AG04450 (cell line): ENCODE measurements at regions of chr2 and their contacts with region 1.

Region 1: DNA sequence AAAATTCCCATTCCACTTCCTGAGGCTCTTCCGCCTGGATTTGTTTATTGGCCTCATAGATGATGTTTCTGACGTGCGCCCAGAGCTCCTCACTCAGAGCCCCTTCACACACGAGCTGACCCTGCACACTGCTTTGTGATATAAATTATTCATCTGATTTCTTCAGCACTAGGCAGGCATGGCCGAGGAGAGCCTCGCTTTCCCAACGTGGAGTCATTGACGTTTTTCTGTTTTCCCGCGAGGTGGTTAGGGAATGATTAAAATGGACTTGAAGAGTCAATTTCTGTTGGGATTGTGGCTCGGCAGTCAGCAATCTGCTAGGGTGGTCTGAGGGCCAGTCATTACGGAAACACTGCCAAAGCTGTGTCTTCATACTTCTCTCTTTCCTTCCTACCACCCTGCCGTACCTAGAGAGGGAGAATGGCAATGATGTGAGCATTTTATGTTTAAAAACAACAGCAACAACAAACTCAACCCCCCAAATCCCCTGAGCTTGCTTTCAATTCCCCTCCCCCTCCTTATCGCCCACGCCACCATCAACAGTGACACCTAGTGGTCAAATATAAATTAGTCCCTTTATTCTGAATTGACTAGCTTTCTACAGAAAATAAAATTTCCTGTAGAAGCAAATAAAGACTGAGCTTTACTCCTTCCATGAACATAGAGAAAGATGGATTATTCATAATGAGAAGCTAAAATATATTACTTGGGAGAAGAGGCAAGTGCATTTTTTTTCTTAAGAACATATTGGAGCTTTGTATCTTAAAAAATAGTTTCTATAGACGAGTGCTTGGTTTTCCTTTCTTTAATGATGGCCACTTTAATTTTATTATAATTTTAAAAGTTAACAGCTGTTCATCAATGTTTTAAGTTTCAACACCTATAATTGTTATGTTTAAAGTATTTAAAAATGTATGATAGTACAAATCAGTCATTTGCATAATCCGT is 285.1 kb downstream of the MTX2 start:
- DNase-seq: peak; percentile 34
- H3K4me3 ChIP-seq: peak overlapping the region; percentile 59
- H3K27ac ChIP-seq: no peak overlapping the region
- H3K27me3 ChIP-seq: no peaks in the 10 kb centered on the region
- CTCF ChIP-seq: peak; percentile 78

Region 2: DNA sequence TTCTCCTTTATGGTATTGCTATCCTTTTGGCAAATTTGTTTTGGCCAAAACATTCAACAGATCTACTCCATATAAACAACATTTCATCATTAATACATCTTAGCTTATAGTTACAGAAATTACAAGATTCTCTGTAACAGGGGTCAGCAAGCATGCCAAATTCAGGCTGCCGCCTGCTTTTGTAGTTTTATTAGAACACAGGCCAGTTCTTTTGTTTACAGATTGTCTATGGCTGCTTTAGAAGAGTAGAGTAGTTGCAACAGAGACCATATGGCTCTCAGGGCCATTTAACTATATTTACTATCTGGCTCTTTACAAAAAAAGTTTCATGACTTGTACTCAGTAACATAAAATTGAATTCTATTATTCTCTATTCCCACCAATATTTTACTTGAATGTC is 606.2 kb before region 1 on chr2:
- CTCF ChIA-PET with region 1: no interaction called
- POLR2A ChIA-PET with region 1: no interaction called
- DNase-seq: no peak
- H3K4me3 ChIP-seq: no peak overlapping the region
- H3K27ac ChIP-seq: no peak overlapping the region
- H3K27me3 ChIP-seq: no peaks in the 10 kb centered on the region
- CTCF ChIP-seq: no peak

Region 3: GRCh38 chr2:176126929-176127773 is 427.2 kb before region 1 on chr2:
- CTCF ChIA-PET with region 1: interaction called, 77 read pairs
- POLR2A ChIA-PET with region 1: no interaction called
- DNase-seq: peak; percentile 29
- H3K4me3 ChIP-seq: no peak overlapping the region
- H3K27ac ChIP-seq: no peak overlapping the region
- H3K27me3 ChIP-seq: peaks cover 84% of the 10 kb centered on the region
- CTCF ChIP-seq: peak; percentile 83

Region 4: GRCh38 chr2:176445956-176446355 is 108.4 kb before region 1 on chr2:
- CTCF ChIA-PET with region 1: interaction called, 18 read pairs
- POLR2A ChIA-PET with region 1: no interaction called
- DNase-seq: peak; percentile 44
- H3K4me3 ChIP-seq: no peak overlapping the region
- H3K27ac ChIP-seq: no peak overlapping the region
- H3K27me3 ChIP-seq: no peaks in the 10 kb centered on the region
- CTCF ChIP-seq: peak; percentile 30

Region 5: DNA sequence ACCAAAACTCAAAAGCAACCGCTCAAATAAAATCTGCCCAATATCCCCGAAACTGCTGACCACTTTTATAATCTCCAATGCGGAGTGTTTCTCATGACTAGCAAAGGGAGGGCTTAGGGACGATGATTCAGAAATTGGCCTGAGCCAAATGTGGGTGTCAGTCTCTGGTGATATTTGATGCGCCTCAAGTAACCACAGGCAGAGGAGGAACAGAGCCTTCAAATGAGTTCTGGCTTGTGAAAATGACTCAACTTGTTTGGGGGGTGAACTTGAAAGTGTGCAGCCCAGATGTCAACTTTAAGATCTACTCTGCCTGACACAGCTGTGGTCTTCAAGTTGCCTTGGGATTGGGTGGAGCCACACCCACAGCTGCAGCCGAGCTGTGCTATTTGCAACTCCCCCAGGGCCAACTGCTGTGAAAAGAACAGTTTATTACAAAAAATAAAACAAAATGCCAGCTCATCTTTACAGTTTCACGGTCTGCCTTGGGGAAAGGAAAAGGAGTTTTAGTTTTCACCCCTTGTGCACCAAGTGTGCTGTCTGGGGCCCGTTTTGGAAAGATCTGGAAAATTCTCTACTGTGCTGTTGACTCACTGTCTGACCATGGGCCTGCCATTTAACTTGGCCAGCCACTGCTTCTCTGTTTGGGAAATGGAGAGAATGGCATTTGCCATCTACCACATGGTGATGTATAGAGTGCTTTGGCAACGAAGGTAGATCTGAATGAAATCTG is 63.0 kb before region 1 on chr2:
- CTCF ChIA-PET with region 1: interaction called, 10 read pairs
- POLR2A ChIA-PET with region 1: no interaction called
- DNase-seq: peak; percentile 97
- H3K4me3 ChIP-seq: no peak overlapping the region
- H3K27ac ChIP-seq: peak overlapping the region; percentile 71
- H3K27me3 ChIP-seq: peaks cover 6% of the 10 kb centered on the region
- CTCF ChIP-seq: no peak

Region 6: DNA sequence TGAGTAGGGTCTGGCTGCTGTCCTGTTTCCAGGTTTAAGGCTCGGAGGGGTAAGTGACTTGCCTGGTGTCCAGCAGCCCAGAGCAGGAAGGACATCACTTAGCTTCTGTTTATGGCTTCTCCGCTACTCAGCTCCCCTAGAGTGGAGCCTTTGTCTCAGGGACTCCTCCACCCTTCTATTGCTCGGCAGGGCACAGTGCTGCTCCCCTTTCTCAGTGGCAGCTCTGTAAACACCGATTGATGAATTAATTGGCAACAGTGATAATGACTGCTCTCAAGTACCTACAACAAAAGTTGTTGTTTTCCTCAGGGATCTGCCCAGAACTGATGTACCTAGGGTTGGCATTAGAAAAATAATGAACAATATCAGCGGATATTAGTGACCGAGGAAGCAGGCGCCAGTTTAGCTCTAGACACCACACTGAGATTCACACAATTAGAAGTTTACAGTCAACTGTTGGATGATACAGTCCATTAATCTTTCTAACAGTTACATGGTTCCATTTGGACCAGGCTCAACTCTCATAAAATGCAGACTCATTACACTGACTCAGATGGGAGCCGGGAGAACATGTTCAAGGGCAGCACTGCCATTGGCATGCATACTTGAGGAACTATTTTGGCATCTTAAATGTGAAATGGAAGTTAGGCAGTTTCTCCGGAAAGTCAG is 19.4 kb before region 1 on chr2:
- CTCF ChIA-PET with region 1: interaction called, 18 read pairs
- POLR2A ChIA-PET with region 1: no interaction called
- DNase-seq: no peak
- H3K4me3 ChIP-seq: no peak overlapping the region
- H3K27ac ChIP-seq: no peak overlapping the region
- H3K27me3 ChIP-seq: peaks cover 4% of the 10 kb centered on the region
- CTCF ChIP-seq: no peak

Region 7: DNA sequence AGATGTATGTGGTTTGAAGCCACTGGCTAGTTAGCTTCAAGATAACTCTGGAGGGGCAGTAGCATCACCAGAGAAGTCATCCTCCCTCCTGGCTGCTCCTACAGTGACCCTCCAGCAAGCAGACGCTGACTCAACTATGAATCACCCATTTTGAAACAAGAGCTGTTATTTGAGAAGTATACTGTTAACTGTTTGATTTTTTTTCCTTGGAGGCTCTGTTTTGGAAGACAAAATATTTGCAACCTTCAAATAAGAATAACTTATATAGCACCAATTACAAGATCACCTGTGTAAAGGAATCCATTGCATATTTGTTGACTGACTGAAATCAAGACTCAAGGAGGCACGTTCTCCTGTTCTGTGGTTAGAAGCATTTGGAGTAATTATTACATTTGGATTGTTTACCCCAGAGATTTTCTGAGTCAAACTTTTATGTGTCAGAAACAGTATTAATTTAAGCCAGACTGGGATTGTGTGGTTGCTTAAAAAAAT is 28.7 kb after region 1 on chr2:
- CTCF ChIA-PET with region 1: interaction called, 45 read pairs
- POLR2A ChIA-PET with region 1: no interaction called
- DNase-seq: peak; percentile 74
- H3K4me3 ChIP-seq: no peak overlapping the region
- H3K27ac ChIP-seq: no peak overlapping the region
- H3K27me3 ChIP-seq: no peaks in the 10 kb centered on the region
- CTCF ChIP-seq: no peak

Region 8: DNA sequence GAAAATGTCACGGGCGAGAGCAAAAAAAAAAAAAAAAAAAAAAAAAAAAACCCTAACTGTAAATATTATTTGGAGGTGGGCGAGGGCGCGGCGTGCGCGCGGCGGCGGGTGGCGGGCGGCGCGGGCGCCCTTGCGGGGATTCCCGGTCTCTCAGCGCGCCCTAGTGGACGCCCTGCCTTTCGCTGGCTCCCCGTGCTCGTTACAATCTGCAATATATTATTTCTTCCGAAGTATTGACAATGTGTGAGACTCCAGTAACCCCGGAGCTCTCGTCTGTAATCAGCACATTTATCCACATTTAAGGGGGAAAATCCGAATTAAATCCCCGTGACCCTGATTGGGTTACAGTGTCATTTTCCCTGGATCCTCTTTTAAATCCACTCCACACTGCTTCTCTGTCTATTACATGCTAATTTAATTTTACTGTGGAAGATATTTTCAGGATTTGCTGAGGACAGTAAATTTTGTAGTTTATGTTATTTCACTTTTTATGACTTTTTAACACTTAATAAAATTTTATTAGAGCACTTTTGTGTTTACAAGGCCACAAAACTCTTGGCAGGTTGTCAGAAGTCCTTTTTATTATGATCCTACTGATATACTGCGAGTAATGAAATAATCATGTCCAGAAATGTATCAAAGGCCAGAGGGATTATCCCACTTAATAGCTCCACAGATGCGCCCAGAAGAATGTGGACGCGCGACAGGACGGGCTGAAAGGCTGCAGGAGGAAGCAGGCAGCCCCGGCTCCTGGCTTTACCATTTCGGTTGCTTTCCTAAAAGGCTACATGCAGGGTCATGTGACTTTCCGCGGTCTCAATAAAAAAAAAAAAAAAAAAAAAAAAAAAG is 84.0 kb after region 1 on chr2:
- CTCF ChIA-PET with region 1: interaction called, 40 read pairs
- POLR2A ChIA-PET with region 1: no interaction called
- DNase-seq: peak; percentile 6
- H3K4me3 ChIP-seq: peak overlapping the region; percentile 63
- H3K27ac ChIP-seq: no peak overlapping the region
- H3K27me3 ChIP-seq: peaks cover 4% of the 10 kb centered on the region
- CTCF ChIP-seq: peak; percentile 69